Posterior cingulate gyrus (tissue), 11 donors: ENCODE measurements at regions of chr22 and their contacts with region 1.

Region 1: GRCh38 chr22:23128269-23129108 is 13.3 kb downstream of the RSPH14 start:
- DNase-seq: peak; percentile 71 to 98 (median 90)

Region 2: DNA sequence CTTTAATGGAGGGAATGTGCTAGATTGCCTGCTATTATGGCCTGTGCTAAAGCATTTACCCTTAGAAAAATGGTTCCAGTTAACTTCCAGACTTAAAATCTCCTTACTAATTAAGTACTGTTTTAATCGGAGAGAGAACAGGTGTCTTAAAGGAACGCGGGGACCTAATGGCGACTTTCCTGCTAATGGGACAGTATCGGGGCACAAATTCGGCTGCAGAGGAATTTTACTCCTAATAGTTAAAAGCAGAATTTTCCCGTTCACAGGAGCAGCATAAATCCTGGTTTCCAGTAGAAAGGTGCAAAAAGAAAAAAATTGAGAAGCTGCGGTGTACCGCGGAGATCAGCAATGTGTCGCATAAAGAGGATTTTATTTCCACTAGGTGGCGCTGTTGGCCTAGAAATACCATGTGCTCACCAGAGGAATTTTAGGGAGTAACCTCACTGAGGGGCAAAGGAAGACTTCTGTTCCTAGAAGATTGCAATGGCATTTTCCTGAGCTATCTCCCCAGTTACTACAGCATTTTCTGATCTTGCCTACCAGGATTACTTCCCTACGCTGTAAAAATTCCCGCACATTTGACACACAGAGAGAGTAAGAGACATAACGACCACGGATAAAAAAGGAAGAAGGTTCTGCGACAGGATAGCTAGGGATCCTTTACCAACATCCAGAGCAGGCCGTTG is 664.5 kb before region 1 on chr22:
- intact Hi-C with region 1: loop called (anchors 10 kb)
- DNase-seq: peak in 5 of 10 donors; percentile 16 to 66 (median 56)

Region 3: DNA sequence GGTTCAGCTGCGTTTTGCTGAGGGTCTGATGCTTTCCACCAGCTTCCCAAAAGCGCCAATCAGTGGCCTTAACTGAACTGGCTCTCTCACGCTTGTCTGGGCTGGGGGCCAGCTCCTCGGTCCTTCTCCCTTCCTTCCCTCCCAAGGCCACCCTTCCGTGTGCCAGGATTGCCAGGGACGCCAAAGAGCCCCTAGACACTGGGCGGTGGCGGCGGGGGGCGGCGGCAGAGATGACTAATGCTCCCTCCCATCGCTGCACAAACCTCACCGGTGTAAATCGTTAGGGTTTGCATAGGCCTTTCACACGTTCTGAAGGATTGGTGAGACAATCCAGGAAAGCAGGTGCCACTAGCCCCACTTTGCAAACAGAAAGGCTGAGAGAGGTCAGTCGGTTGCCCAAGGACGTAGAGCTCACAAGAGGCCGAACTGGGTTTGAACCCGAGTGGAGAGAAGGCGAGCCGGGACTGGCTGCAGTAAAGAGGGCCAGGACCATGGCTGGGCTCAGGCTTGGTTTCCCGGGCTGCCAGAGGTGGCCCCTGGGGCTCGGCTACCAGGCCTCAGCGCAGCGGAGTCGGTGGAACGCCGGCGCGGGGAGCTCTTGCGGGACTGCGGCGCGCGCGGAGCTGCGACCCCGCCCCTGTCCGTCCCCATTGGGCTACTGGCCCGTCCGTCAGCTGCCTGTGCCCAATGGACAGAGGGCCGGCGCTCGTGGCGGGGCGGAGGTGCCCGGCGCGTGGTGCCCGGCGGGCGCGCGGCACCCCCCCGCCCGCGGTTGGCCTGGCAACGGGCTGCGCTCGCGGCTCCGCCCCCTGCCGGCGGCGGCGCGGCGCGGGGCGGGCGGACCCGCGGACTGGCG is 58.8 kb before region 1 on chr22:
- intact Hi-C with region 1: loop called (anchors 5 kb)
- DNase-seq: peak; percentile 90 to 99 (median 94)

Region 4: DNA sequence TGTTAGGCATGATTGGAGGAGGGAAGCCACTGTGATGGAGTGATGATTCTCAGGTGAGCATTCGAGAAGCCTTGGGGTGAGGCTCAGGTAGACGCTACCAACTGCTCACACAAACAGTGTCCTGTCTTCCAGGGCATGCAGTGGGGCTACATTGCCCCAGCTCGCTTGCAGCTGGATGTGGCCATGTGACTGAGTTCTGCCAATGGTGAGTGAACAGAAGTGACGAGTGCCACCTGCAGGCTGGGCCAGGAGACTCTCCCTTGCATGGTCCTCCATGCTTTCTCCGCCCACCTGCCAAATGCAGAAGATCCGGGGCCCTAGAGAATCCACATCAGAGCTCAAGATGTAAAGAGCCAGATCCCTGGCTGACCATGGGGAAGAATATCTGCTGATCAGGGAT is 247.8 kb after region 1 on chr22:
- intact Hi-C with region 1: no loop called
- DNase-seq: peak in 2 of 10 donors; percentile 30 to 45